ENCODE measurements at regions of chr16 and their contacts with region 1.

Region 1: GRCh38 chr16:85202631-85203461 is 90.6 kb upstream of the CIBAR2 start:
- DNase-seq: peak; percentile 74
- H3K4me3 ChIP-seq: no peak overlapping the region
- H3K27ac ChIP-seq: peak overlapping the region; percentile 73 to 86 (median 82)
- H3K4me1 ChIP-seq: peaks cover 35 to 65% (median 39%) of the 10 kb centered on the region in 4 donors
- H3K27me3 ChIP-seq: peaks cover 13% of the 10 kb centered on the region
- CTCF ChIP-seq: no peak
- EP300 ChIP-seq: no peak
- POLR2A ChIP-seq: no peak

Region 2: DNA sequence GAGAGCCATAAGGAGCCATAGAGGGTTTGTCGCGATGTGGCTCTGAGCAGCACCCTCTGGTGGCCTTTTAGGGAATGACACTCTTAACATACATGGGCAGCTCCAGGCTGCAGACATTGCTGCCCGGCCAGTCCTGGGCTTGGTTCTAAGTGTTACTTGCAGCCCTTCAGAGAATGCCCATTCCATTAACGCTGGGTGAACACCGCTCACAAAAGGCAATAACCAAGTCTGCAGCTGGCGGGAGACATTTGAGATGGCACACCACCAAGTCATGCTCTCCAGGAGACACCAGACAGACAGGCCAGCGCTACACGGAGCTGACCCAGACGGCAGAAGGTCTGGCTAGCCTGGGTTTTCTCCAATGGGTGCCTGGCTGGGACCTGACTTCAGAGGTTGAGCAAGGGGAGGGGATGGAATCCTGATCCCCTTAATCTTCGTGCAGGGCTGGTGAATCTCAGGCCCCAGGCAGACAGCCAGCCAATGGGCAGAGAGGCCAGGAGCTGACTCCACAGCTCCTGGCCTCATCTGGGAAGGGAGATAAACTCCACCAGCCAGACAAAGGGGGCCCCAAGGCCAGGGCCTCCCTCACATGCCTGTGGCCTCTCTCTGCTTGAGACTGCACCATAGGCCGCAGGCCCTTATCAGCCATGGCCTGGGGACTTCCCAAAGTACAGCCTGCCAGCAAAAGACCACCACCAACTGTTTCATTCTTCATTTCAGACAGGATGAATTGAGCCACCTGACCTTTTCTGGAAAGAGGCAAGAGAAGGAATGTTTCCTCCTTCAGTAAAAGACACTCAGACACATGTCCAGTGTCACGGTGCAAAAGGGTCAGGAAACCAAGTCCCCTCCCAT is 250.3 kb before region 1 on chr16:
- in situ Hi-C with region 1: no loop called
- intact Hi-C with region 1: no loop called
- DNase-seq: peak; percentile 83
- H3K4me3 ChIP-seq: no peak overlapping the region
- H3K27ac ChIP-seq: peak overlapping the region; percentile 19 to 74 (median 48)
- H3K4me1 ChIP-seq: peaks cover 4 to 14% (median 9%) of the 10 kb centered on the region in 4 donors
- H3K27me3 ChIP-seq: no peaks in the 10 kb centered on the region
- CTCF ChIP-seq: peak; percentile 91 to 95 (median 92)
- EP300 ChIP-seq: no peak
- POLR2A ChIP-seq: no peak

Region 3: GRCh38 chr16:85137323-85138072 is 65.3 kb before region 1 on chr16:
- in situ Hi-C with region 1: no loop called
- intact Hi-C with region 1: loop called (anchors 1 kb)
- DNase-seq: peak; percentile 85
- H3K4me3 ChIP-seq: peak overlapping the region; percentile 6 to 18 (median 15)
- H3K27ac ChIP-seq: peak overlapping the region; percentile 68 to 87 (median 81)
- H3K4me1 ChIP-seq: peaks cover 14 to 29% (median 15%) of the 10 kb centered on the region in 4 donors
- H3K27me3 ChIP-seq: peaks cover 5% of the 10 kb centered on the region
- CTCF ChIP-seq: no peak
- EP300 ChIP-seq: peak; percentile 74
- POLR2A ChIP-seq: no peak

Region 4: DNA sequence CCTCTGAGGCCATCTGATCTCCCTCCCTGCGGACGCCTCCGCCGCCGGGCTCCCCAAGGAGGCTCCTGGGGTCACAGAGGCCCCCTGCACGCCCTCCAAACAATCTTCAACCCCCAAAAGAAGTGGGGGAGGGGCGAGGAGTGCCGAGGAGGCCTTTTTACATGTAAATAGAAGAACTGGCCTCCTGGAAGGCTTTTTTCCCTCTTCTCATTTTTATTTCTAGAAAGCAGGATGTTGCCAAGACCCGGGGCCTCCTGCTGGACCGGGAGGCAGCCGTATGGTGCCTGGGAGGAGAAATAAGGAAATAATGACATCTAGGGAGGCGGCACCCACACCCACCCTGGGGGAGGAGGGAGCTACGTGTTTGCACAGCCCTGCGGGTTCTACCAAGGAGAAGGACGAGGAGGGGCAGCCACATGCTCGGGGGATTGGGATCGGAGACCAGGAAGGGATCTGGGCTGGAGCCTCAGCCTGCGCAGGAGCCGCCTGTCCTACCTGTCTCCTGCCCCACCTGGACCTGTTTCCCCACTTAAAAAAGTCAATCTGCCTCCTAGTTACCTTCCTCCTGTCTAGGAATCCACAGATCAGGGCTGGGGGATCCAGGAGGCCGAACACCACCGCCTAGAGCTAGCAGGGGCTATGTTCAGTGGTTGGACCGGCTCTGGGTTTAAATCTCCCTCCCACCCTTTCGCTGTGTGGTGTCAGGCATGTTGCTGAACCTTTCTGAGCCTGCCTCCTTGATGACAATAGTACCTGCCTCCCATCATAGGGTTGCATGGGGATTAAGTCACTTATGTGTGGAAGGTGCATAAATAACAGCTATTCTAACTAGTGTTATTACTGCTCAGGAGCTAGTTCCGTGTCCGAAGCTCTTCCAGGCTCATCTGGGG is 234.6 kb after region 1 on chr16:
- in situ Hi-C with region 1: no loop called
- intact Hi-C with region 1: no loop called
- DNase-seq: peak; percentile 89
- H3K4me3 ChIP-seq: peak overlapping the region in 2 of 4 donors; percentile 15 to 16
- H3K27ac ChIP-seq: peak overlapping the region; percentile 87 to 93 (median 90)
- H3K4me1 ChIP-seq: peaks cover 20 to 33% (median 32%) of the 10 kb centered on the region in 4 donors
- H3K27me3 ChIP-seq: no peaks in the 10 kb centered on the region
- CTCF ChIP-seq: peak in 2 of 5 experiments; percentile 22 to 23
- EP300 ChIP-seq: no peak
- POLR2A ChIP-seq: peak; percentile 52

Measured in transverse colon (tissue), 4 donors.